CD4-positive, alpha-beta T cell (primary cell): ENCODE measurements at regions of chr22 and their contacts with region 1.

Region 1: DNA sequence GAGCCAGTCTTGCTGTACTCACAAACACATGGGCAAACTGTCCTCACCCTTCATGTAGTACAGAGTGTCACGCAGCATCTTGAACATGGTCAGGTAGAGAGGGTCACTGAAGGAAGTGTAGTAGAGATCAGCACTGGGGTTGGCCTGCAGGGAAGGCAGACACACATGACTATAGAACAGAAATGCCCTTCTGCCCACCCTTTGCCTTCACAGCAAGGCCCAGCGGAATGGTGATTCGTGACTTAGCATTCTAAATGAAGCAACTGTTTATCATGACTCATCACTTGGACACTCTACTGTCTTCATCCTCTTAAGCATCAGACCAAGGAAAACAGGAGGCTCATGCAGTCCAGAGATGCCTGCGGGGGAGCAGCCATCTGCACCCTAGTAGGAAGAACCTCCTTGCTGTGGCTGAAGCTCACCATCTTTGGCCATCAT is 33.4 kb downstream of the SERPIND1 start:
- DNase-seq: no peak
- ATAC-seq: no peak
- H3K4me3 ChIP-seq: no peak overlapping the region
- H3K4me3 Mint-ChIP-seq: no peak overlapping the region
- H3K27ac ChIP-seq: no peak overlapping the region
- H3K27ac Mint-ChIP-seq: no peak overlapping the region
- H3K4me1 ChIP-seq: no peaks in the 10 kb centered on the region
- H3K4me1 Mint-ChIP-seq: peaks cover 13% of the 10 kb centered on the region
- H3K27me3 ChIP-seq: no peaks in the 10 kb centered on the region
- H3K27me3 Mint-ChIP-seq: no peaks in the 10 kb centered on the region
- CTCF ChIP-seq: no peak

Region 2: DNA sequence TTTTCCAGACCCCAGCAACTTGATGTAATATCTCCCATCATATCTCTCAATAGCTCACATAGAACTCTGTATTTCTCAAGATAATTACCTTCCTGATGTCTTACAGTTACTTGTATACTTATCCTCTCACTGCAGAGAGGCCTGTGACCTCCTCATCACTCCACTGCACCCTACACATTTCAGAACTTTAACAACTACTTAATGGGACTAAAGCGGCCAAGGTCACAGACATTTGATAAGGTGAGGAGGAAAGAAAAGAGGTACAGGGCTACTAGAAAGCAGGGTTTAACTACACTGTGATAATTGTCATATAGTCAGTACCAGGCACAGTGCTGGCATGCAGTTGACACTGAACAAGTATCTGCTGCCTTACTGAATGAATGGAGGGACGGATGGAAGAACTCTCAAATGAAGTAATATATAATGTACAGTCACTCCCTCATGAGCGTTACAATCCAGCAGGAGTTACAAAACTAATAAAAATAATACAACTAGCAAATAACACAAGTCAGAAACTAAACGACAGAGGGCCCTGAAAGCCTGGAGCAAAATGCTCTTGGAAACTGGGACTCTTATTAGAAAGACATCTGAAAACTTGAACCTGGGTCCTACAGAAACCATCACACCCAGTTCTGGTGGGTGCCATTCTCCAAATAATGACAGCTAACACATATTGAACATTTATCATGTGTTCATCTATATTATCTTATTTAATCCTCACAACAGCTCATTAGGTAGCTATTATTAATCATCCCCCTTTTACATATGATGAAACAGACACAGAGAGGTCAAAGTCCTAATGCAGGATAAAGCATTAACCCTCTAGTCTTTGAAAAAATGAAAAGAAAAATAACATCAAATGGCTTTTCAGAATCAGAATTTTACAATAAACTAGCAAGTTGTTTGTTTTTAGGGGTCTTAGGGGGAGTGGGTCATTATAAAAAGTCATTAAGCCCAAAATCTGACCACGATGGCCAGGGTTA is 37.0 kb after region 1 on chr22:
- CTCF ChIA-PET with region 1: no interaction called
- POLR2A ChIA-PET with region 1: no interaction called
- intact Hi-C with region 1: loop called in 1 of 2 experiments (anchors 5 kb)
- DNase-seq: no peak
- ATAC-seq: no peak
- H3K4me3 ChIP-seq: no peak overlapping the region
- H3K4me3 Mint-ChIP-seq: no peak overlapping the region
- H3K27ac ChIP-seq: no peak overlapping the region
- H3K27ac Mint-ChIP-seq: no peak overlapping the region
- H3K4me1 ChIP-seq: peaks cover 19% of the 10 kb centered on the region
- H3K4me1 Mint-ChIP-seq: peaks cover 67% of the 10 kb centered on the region
- H3K27me3 ChIP-seq: no peaks in the 10 kb centered on the region
- H3K27me3 Mint-ChIP-seq: no peaks in the 10 kb centered on the region
- CTCF ChIP-seq: no peak